ENCODE measurements at regions of chr11 and their contacts with region 1.

Region 1: DNA sequence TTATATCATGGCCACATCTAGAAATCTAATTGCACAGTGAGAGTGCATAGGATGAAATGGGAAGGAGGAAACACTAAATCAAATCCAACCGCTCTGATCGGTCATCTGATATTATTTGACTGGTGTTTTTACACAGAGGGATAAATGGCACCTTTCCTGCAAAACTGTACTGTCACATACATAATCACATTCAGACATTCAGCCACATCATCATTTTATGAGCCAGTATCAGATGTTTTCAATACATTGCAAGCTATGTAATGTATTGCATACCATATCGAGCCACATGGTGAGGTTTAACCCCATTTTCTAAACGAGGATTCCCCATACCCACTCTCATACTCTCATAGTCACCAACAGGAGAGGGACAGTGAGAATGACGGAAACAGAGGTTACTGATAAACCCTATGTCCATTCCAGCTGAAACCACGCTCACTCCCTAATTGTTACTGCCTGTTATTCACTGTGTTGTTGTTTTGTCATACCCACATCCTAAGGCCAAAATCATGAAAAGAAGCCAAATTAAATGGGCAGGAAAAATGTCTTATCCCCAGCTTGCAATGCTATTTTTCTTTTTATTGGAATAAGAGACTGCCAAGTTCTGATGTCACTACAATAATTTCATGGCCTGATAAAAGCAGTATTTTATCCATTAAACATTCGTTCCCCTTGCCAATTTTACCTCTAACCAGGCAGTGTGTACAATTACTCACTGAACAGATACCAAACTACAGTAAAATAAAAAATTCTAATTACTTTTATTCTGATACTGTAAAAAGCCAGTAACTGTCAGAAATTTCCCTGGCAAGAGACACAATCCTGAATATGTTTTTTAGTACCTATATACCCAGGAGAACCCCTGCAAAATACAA is 9.0 kb downstream of the CDON start:
- DNase-seq: no peak
- ATAC-seq: 0 out of 3 replicates have a peak, but pooled peaks have one; percentile 15
- H3K4me3 ChIP-seq: no peak overlapping the region
- H3K27ac ChIP-seq: no peak overlapping the region
- H3K4me1 ChIP-seq: no peaks in the 10 kb centered on the region
- H3K27me3 ChIP-seq: peaks cover 0 to 3% of the 10 kb centered on the region in 2 experiments; a peak in 2 of 4 replicates
- CTCF ChIP-seq: no peak
- EP300 ChIP-seq: no peak
- POLR2A ChIP-seq: no peak
- RAD21 ChIP-seq: no peak

Region 2: GRCh38 chr11:126002181-126002580 is 51.5 kb before region 1 on chr11:
- CTCF ChIA-PET with region 1: no interaction called
- POLR2A ChIA-PET with region 1: no interaction called
- RAD21 ChIA-PET with region 1: no interaction called
- SMC1A ChIA-PET with region 1: interaction called, 3 read pairs
- in situ Hi-C with region 1: no loop called
- intact Hi-C with region 1: loop called (anchors 5 kb)
- DNase-seq: no peak
- ATAC-seq: peak; percentile 76
- H3K4me3 ChIP-seq: no peak overlapping the region
- H3K27ac ChIP-seq: no peak overlapping the region
- H3K4me1 ChIP-seq: no peaks in the 10 kb centered on the region
- H3K27me3 ChIP-seq: no peaks in the 10 kb centered on the region
- CTCF ChIP-seq: no peak
- EP300 ChIP-seq: no peak
- POLR2A ChIP-seq: no peak
- RAD21 ChIP-seq: no peak

Region 3: GRCh38 chr11:126039485-126040271 is 14.0 kb before region 1 on chr11:
- CTCF ChIA-PET with region 1: interaction called, 8 read pairs
- POLR2A ChIA-PET with region 1: interaction called, 3 read pairs
- RAD21 ChIA-PET with region 1: interaction called, 4 read pairs
- SMC1A ChIA-PET with region 1: interaction called, 12 read pairs
- in situ Hi-C with region 1: no loop called
- intact Hi-C with region 1: no loop called
- DNase-seq: no peak
- ATAC-seq: peak; percentile 94
- H3K4me3 ChIP-seq: no peak overlapping the region
- H3K27ac ChIP-seq: no peak overlapping the region
- H3K4me1 ChIP-seq: no peaks in the 10 kb centered on the region
- H3K27me3 ChIP-seq: no peaks in the 10 kb centered on the region
- CTCF ChIP-seq: no peak
- EP300 ChIP-seq: no peak
- POLR2A ChIP-seq: no peak
- RAD21 ChIP-seq: no peak

Region 4: DNA sequence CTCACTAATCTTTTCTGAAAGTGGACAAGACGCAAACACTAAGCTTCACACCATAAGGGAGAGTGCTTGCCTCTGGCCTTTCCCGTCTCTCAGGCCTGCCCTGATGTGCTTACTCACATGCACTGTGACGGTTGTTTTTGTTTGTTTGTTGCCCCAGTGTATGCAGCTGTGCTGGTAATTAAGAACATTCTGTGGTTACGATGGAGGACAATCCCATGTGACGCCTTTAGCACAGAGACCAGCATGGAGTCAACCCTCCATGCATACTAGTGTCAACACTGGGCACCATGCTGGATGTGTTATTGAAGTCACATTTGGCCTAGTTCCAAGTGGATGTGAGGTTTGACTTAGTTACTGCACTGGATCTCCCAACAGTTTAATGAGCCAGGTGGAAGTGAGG is 36.8 kb after region 1 on chr11:
- CTCF ChIA-PET with region 1: no interaction called
- POLR2A ChIA-PET with region 1: no interaction called
- RAD21 ChIA-PET with region 1: no interaction called
- SMC1A ChIA-PET with region 1: no interaction called
- in situ Hi-C with region 1: no loop called
- intact Hi-C with region 1: no loop called
- DNase-seq: no peak
- ATAC-seq: no peak
- H3K4me3 ChIP-seq: no peak overlapping the region
- H3K27ac ChIP-seq: no peak overlapping the region
- H3K4me1 ChIP-seq: no peaks in the 10 kb centered on the region
- H3K27me3 ChIP-seq: no peaks in the 10 kb centered on the region
- CTCF ChIP-seq: no peak
- EP300 ChIP-seq: no peak
- POLR2A ChIP-seq: no peak
- RAD21 ChIP-seq: no peak